ENCODE measurements at regions of chr16 and their contacts with region 1.

Region 1: DNA sequence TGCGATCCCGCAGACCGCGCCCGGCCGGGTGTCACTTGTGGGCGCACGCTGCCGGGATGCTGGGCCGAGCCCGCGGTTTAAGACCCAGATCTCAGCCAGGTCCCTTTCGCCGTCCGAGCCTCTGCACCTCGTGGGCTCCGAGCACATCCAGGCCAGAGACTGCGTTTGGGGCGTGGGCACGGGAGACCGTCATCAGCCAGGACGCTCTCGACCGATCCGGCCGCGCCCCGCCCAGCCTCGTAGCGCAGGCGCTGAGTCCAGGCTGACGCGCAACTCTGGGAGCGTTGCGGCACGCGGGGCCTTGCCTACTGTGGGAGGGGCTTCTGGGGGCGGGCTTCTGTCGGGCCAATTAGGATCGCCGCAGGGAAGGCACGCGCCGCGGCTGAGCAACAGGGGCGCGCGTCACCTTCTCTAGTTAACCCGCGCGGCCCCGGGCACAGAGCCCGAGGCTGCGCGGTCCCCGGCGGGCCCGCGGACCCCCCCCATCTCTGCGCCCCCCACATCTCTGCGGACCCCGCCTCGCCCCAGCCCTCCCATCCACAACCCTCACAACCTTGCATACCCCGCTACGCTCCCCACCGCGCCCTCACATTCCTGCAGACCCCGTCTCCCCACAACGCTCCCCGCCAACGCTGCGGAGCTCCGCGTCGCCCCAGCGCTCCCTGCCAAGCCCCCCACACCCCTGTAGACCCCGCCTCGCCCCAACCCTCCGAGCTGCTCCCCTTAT is 722 bp upstream of the CEMP1 start:
- DNase-seq: peak; percentile 88 to 95
- H3K4me3 ChIP-seq: peak overlapping the region; percentile 63 to 76 (median 72)
- H3K27ac ChIP-seq: peak overlapping the region; percentile 50; the same call in 1 of the 2 replicates
- H3K4me1 ChIP-seq: peaks cover 0 to 9% (median 7%) of the 10 kb centered on the region in 4 experiments; a peak in 4 of 7 replicates
- H3K27me3 ChIP-seq: no peaks in the 10 kb centered on the region
- CTCF ChIP-seq: no peak
- EP300 ChIP-seq: peak in 1 of 2 experiments; percentile 21; a peak in 1 of 3 replicates
- POLR2A ChIP-seq: peak; percentile 88 to 89
- RAD21 ChIP-seq: no peak

Region 2: DNA sequence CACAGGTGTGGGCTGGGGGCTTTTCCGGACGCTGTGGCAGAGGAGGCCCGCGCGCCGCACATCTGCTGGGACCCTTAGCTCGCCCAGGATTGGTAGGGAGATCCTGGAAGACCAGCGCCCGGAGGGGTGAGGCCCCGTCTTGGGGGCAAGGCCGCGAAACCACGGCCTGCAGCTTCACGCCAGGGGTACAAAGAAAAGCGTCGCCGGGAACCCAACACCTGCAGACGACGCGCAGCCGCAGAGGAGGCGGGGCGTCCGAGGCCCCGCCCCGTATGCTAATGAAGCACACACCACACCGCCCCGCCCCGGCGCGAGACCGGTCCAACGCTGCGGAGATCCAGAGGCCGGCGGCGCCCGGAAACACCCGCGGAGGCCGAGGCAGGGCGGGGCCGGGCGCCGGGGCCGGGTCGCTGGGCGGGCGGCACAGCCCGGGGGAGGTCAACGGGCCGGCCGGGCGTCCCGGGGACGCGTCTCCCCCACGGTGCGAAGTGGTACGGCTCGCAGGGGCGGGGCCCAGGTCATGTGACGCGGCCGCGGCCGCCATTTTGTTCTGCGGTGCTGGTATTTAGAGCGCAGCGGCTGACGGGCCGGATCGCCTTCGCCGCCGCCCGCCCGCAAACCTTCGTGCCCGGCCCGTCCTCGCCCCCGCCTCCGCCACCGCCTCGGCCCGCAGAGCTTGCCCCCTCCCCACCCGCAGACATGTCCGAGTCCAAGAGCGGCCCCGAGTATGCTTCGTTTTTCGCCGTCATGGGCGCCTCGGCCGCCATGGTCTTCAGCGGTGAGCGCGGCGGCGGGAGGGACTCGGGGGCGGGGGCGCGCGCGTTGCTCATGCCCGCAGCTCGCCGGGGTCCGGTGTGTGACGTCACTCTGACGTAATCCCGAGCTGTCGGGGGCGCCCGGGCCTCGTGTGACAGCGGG is 18.3 kb before region 1 on chr16 and contains the start of gene ATP6V0C:
- CTCF ChIA-PET with region 1: interaction called, 4 read pairs
- POLR2A ChIA-PET with region 1: interaction called, 108 read pairs
- DNase-seq: peak; percentile 80 to 96
- H3K4me3 ChIP-seq: peak within 1 kb of the TSS; percentile 77 to 99 (median 84)
- H3K27ac ChIP-seq: peak within 1 kb of the TSS; percentile 99
- H3K4me1 ChIP-seq: peaks cover 4 to 37% (median 22%) of the 10 kb centered on the region in 4 experiments
- H3K27me3 ChIP-seq: peaks cover 0 to 3% (median 0%) of the 10 kb centered on the region in 4 experiments; a peak in 2 of 7 replicates
- CTCF ChIP-seq: no peak
- EP300 ChIP-seq: peak in 1 of 2 experiments; percentile 90; a peak in 2 of 3 replicates
- POLR2A ChIP-seq: peak in 1 of 2 experiments; percentile 95; a peak in 2 of 3 replicates
- RAD21 ChIP-seq: no peak
- total RNA-seq, gene ATP6V0C: 176 and 199 TPM in 2 replicates

Region 3: GRCh38 chr16:2520092-2520783 is 11.7 kb before region 1 on chr16 and contains the start of gene AMDHD2:
- CTCF ChIA-PET with region 1: interaction called, 5 read pairs
- POLR2A ChIA-PET with region 1: interaction called, 108 read pairs
- DNase-seq: peak in 1 of 2 experiments; percentile 92
- H3K4me3 ChIP-seq: peak within 1 kb of the TSS; percentile 45 to 87 (median 80)
- H3K27ac ChIP-seq: no peak within 1 kb of the TSS
- H3K4me1 ChIP-seq: peaks cover 0 to 16% (median 2%) of the 10 kb centered on the region in 4 experiments; a peak in 5 of 7 replicates
- H3K27me3 ChIP-seq: no peaks in the 10 kb centered on the region
- CTCF ChIP-seq: no peak
- EP300 ChIP-seq: peak in 1 of 2 experiments; percentile 85; a peak in 1 of 3 replicates
- POLR2A ChIP-seq: peak; percentile 60 to 81; a peak in 2 of 3 replicates
- RAD21 ChIP-seq: peak in 1 of 2 experiments; percentile 18; a peak in 1 of 4 replicates
- total RNA-seq, gene AMDHD2: 43.0 and 45.0 TPM in 2 replicates

Region 4: DNA sequence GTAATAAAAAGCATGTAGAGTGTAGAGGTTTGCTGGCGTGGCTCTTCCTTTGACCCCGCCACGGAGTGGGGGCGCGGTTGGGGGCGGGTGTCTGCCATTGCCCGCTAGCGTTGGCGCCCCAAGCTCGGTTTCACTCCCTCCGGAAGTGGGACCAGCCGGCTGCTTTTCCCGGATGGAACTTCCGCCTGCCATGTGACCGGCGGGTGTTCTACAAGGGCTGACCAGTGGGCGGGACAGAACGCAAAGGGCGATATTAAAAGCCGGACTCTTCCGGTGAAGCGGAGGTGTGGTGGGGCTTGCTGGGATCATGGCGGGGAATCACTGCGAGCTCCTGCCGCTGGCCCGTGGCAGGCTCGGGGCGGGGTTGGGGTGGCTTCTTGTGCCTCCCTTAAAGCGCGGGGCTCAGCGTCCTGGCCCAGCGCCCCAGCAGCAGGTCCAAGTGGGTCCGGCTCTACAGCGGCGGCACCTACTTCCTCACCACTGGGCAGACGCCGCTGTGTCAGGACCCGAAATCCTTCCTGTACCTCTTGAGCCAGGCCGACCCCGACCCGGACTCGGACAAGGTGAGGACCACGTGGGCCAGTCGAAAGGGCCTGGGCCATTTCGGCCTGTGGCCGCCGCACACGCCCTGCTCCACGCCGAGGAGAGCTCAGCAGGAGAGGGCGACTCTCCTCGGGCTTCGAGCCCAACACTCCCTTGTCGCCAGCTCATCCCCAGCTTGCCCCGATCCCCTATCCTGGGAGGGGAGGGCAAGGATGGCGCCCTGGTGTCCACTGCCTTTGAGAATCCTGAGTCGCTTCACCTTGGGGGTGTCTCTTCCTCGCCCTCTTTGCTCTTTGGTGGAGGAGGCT is 71.5 kb after region 1 on chr16:
- CTCF ChIA-PET with region 1: no interaction called
- POLR2A ChIA-PET with region 1: interaction called, 11 read pairs
- DNase-seq: peak; percentile 86 to 95
- H3K4me3 ChIP-seq: peak overlapping the region; percentile 80 to 95 (median 88)
- H3K27ac ChIP-seq: peak overlapping the region; percentile 84
- H3K4me1 ChIP-seq: peaks cover 0 to 2% (median 0%) of the 10 kb centered on the region in 4 experiments; a peak in 1 of 7 replicates
- H3K27me3 ChIP-seq: no peaks in the 10 kb centered on the region
- CTCF ChIP-seq: 0 out of 4 replicates have a peak, but pooled peaks of 1 of the 3 experiments have one; percentile 14
- EP300 ChIP-seq: peak in 1 of 2 experiments; percentile 62; a peak in 1 of 3 replicates
- POLR2A ChIP-seq: peak; percentile 96 to 97
- RAD21 ChIP-seq: no peak

Measured in H1 (cell line).